Sciatic nerve (tissue), 2 donors: ENCODE measurements at regions of chr20 and their contacts with region 1.

Region 1: GRCh38 chr20:50478162-50479036 is 31.8 kb upstream of the PTPN1 start:
- DNase-seq: peak; percentile 71
- ATAC-seq: peak; percentile 59

Region 2: DNA sequence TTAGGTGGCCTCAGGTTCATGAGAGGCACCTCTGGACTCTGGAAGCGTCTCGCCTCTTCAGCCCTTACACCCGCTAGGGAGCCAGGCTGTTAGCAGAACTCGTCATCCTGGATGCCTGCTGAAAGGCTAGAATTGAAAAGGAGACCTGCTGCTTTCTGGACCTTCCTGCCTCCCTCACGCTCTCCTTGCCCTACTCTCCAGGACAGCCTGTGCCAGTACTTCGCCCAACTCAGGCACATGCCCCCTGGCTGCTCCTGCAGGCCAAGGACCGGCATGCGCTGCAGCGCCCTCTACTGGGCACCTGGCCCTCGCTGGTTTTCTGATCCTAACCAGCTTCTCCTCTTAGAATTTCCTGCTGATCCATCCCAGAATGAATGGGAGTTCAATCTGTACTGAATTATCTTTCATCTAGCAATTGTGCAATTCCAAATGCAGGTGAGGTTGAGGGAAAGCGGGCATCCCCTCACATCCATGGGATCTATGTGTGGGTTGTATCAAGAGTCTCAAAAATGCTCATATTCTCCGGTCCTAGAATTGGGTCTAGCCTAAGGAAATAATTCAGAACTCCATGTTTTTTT is 109.7 kb after region 1 on chr20:
- intact Hi-C with region 1: loop called (anchors 10 kb)
- DNase-seq: peak; percentile 85
- ATAC-seq: peak; percentile 37